ENCODE measurements at regions of chr6 and their contacts with region 1.

Region 1: DNA sequence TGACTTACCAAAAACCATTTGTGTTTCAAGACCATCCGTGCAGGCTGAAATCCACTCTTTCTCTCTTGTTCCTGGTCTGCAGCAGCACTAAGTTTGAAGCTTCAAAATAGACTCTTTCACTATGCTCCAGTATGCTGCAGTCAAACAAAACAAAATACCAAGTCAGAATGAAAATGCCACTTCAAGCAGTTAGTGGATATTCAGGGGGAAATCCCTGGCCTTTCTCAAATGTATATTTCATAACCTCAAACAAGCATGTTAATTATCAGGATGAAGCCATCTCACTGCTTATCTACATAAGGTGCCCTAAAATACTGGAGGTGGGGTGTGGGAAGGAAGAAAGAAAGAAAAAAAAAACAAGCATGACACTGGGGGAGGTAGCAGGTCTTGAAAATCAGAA is 103.5 kb downstream of the ATXN1 start:
- DNase-seq: no peak
- ATAC-seq: peak; percentile 70
- H3K4me3 Mint-ChIP-seq: peak overlapping the region; percentile 39
- H3K27ac Mint-ChIP-seq: peak overlapping the region; percentile 81
- H3K4me1 Mint-ChIP-seq: peaks cover 68% of the 10 kb centered on the region
- H3K27me3 Mint-ChIP-seq: no peaks in the 10 kb centered on the region

Region 2: DNA sequence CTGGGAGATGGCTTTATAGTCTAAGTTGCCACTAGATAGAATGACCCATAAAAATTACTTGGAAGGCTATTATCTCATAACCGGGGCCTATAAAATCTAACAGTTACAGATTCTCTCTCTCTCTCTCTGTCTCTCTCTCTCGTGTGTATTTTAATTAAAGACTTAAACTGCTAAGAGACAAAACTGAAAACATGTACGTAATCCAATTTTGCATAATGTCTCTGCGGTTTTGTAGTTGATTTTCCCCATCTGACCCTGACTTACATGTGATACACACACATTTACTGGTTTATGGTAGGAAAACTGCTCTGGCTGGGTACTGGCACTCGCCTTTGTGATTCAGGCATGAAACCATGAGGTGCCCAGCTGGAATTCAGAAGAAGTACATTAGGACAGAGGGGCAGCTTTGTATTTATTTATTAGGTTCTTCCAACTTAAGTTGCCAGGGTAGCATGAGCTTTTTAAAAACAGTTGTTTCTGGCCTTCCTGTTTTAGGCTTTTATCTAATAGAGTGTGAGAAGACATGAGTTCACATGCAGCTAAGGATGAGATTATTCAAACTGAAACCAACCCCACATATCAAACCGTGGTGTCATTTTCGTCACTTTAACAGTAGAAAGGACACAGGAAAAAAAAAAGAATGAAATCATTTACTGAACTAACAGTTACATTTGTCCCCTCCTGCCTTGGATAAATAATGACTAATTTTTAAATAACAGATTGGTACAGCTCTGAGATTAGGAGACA is 236.9 kb before region 1 on chr6:
- CTCF ChIA-PET with region 1: no interaction called
- POLR2A ChIA-PET with region 1: no interaction called
- intact Hi-C with region 1: loop called in 1 of 2 experiments (anchors 1 kb)
- DNase-seq: peak; percentile 66
- ATAC-seq: peak; percentile 82
- H3K4me3 Mint-ChIP-seq: peak overlapping the region; percentile 58
- H3K27ac Mint-ChIP-seq: peak overlapping the region; percentile 94
- H3K4me1 Mint-ChIP-seq: peaks cover 53% of the 10 kb centered on the region
- H3K27me3 Mint-ChIP-seq: no peaks in the 10 kb centered on the region

Region 3: DNA sequence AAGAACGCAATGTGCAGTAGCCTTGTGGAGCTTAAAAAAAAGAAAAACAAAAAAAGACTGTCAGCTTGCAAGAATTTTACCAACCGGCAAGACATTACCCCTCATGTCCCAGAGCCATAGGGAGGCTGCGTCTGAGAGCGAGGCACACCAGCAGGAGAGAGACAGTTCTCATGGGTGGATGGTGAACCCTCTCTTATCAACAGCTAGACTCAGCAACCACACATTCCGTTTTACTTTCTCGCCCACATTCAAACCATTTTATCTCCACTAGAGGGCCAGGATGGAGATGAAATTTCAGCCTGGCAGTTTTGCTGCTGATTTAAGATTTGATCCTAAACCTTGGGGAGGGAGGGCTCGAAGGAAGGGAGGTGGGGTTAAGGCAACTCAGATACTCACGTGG is 143.5 kb before region 1 on chr6:
- CTCF ChIA-PET with region 1: no interaction called
- POLR2A ChIA-PET with region 1: no interaction called
- intact Hi-C with region 1: loop called in 1 of 2 experiments (anchors 5 kb)
- DNase-seq: peak; percentile 37
- ATAC-seq: peak; percentile 43
- H3K4me3 Mint-ChIP-seq: no peak overlapping the region
- H3K27ac Mint-ChIP-seq: no peak overlapping the region
- H3K4me1 Mint-ChIP-seq: peaks cover 69% of the 10 kb centered on the region
- H3K27me3 Mint-ChIP-seq: no peaks in the 10 kb centered on the region

Region 4: DNA sequence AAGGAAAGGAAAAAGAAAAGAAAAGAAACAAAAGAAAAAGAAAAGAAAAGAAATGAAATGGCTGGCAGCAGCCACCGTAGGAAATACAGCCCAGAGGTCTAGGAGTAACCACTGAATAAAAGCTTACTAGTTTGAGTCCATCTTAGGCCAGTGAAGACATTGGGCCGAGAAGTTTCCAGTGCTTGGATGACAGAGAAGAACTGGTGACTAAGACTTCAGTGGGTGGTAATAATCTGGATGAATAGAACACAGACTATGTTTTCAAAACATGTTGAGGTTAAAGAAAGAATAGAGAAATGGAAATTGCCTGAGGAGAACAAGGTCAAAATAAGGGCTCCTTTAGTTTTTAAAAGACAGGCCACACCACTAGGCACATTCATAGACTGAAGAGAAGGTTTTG is 95.3 kb before region 1 on chr6:
- CTCF ChIA-PET with region 1: no interaction called
- POLR2A ChIA-PET with region 1: no interaction called
- intact Hi-C with region 1: no loop called
- DNase-seq: no peak
- ATAC-seq: peak; percentile 65
- H3K4me3 Mint-ChIP-seq: no peak overlapping the region
- H3K27ac Mint-ChIP-seq: no peak overlapping the region
- H3K4me1 Mint-ChIP-seq: no peaks in the 10 kb centered on the region
- H3K27me3 Mint-ChIP-seq: no peaks in the 10 kb centered on the region

Region 5: GRCh38 chr6:16591396-16592222 is 66.2 kb before region 1 on chr6:
- CTCF ChIA-PET with region 1: interaction called, 4 read pairs
- POLR2A ChIA-PET with region 1: interaction called, 6 read pairs
- intact Hi-C with region 1: loop called (anchors 2 kb)
- DNase-seq: peak; percentile 61
- ATAC-seq: peak; percentile 87
- H3K4me3 Mint-ChIP-seq: no peak overlapping the region
- H3K27ac Mint-ChIP-seq: peak overlapping the region; percentile 78
- H3K4me1 Mint-ChIP-seq: peaks cover 19% of the 10 kb centered on the region
- H3K27me3 Mint-ChIP-seq: no peaks in the 10 kb centered on the region

Region 6: DNA sequence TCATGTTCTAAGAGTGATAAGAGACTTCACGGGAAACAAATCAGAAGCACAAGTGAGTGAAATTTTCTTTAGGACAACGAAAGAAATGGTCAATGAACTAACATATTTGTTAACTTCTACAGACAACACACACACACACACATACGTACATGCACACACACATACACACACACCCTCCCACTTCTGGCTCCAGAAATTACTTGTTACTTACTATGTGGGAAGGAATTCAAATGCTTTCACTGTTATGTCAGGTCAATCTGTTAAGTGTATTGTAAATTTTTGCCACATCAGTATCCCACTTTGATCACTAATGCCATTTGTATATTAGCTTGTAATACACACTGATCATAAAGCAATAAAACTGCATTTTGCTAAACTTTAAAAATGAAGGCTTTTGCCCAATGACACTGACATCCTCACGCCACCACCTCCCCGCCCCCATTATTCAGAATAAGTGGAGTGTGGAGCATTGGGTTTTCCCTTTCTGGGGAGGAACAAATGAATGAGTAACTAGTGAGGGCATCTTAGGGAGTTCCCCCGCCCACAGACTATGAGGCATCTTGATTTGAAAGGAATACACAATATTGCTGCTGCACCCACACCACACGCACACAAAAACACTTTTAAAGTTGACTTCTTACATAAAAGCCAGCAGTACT is 27.3 kb after region 1 on chr6:
- CTCF ChIA-PET with region 1: interaction called, 4 read pairs
- POLR2A ChIA-PET with region 1: no interaction called
- intact Hi-C with region 1: loop called (anchors 1 kb)
- DNase-seq: peak; percentile 95
- ATAC-seq: peak; percentile 76
- H3K4me3 Mint-ChIP-seq: peak overlapping the region; percentile 43
- H3K27ac Mint-ChIP-seq: peak overlapping the region; percentile 78
- H3K4me1 Mint-ChIP-seq: peaks cover 86% of the 10 kb centered on the region
- H3K27me3 Mint-ChIP-seq: no peaks in the 10 kb centered on the region

Region 7: GRCh38 chr6:16698997-16699868 is 41.5 kb after region 1 on chr6:
- CTCF ChIA-PET with region 1: interaction called, 5 read pairs
- POLR2A ChIA-PET with region 1: interaction called, 12 read pairs
- intact Hi-C with region 1: no loop called
- DNase-seq: peak; percentile 45
- ATAC-seq: peak; percentile 63
- H3K4me3 Mint-ChIP-seq: peak overlapping the region; percentile 69
- H3K27ac Mint-ChIP-seq: peak overlapping the region; percentile 95
- H3K4me1 Mint-ChIP-seq: peaks cover 75% of the 10 kb centered on the region
- H3K27me3 Mint-ChIP-seq: no peaks in the 10 kb centered on the region

Region 8: GRCh38 chr6:16736856-16737775 is 79.3 kb after region 1 on chr6:
- CTCF ChIA-PET with region 1: no interaction called
- POLR2A ChIA-PET with region 1: no interaction called
- intact Hi-C with region 1: no loop called
- DNase-seq: no peak
- ATAC-seq: no peak
- H3K4me3 Mint-ChIP-seq: no peak overlapping the region
- H3K27ac Mint-ChIP-seq: no peak overlapping the region
- H3K4me1 Mint-ChIP-seq: peaks cover 45% of the 10 kb centered on the region
- H3K27me3 Mint-ChIP-seq: no peaks in the 10 kb centered on the region

Region 9: DNA sequence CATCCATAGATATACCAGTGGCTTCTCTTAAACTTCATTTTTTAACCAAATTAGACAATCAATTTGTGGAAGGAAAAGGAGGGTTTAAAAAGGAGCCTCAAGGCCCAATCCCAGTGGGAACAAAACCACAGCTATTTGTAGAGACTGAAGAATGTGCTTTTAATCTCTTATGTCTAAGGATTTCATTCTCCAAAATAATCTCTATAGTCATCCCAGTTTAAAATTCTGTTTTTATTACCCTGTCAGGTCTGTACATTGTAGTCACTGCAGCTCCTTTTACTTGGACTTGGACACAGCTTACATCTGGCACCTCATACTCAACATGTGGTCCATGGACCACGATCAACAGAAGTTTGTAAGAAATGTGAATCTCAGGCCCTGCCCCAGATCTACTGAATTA is 291.9 kb after region 1 on chr6:
- CTCF ChIA-PET with region 1: no interaction called
- POLR2A ChIA-PET with region 1: no interaction called
- intact Hi-C with region 1: loop called in 1 of 2 experiments (anchors 2 kb)
- DNase-seq: no peak
- ATAC-seq: no peak
- H3K4me3 Mint-ChIP-seq: no peak overlapping the region
- H3K27ac Mint-ChIP-seq: no peak overlapping the region
- H3K4me1 Mint-ChIP-seq: peaks cover 21% of the 10 kb centered on the region
- H3K27me3 Mint-ChIP-seq: peaks cover 45% of the 10 kb centered on the region